ENCODE measurements at regions of chr3 and their contacts with region 1.

Region 1: DNA sequence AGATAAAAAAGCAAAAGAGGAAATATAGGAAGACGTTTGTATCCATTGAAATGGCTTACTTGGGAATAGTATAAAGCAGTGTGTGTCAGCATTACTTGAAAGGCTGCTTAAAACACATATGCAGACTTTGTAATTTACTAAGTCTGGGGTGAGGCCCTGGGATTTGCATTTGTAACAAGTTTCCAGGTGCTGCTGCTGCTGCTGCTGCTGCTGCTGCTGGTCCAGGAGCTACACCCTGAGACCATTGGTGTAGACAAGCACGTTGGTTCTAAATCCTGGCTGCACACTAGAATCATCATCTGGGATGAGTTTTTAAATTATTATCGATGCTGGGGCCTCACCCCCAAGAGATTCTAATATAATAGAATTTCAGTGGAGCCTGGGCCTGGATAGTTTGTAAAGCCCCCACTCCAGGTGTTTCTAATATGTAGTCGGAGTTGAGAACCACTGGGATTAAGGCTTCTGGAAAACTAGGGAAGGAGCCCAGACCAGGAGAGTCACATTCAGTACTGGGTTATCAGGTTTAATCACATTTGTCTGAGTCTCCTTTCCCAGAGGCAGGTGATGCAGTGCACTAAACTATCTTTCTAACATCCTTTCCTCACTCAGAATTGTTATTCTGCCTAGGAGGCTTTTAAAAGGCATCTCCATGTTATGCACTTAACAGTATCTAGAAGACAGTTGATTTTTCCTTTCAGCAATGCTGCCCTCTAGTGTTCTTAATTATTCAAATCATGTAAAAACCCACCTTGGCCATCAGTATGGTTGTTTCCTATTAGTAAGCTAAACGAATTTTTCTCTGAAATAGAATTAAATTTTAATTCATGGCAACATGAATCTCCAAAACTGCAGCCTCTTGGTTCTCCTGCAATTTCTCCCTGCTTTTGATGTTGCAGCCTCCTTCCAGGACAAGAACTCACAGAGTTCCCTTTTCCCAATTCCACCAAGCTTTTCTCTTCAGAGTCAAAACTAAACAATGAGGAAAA is 45.4 kb downstream of the SSR3 start:
- DNase-seq: peak; percentile 66
- ATAC-seq: peak; percentile 57
- H3K4me3 ChIP-seq: no peak overlapping the region
- H3K4me3 Mint-ChIP-seq: no peak overlapping the region
- H3K27ac ChIP-seq: no peak overlapping the region
- H3K27ac Mint-ChIP-seq: no peak overlapping the region
- H3K4me1 ChIP-seq: no peaks in the 10 kb centered on the region
- H3K4me1 Mint-ChIP-seq: no peaks in the 10 kb centered on the region
- H3K27me3 ChIP-seq: peaks cover 0 to 4% (median 2%) of the 10 kb centered on the region in 4 experiments
- H3K27me3 Mint-ChIP-seq: peaks cover 23% of the 10 kb centered on the region
- CTCF ChIP-seq: peak; percentile 81

Region 2: DNA sequence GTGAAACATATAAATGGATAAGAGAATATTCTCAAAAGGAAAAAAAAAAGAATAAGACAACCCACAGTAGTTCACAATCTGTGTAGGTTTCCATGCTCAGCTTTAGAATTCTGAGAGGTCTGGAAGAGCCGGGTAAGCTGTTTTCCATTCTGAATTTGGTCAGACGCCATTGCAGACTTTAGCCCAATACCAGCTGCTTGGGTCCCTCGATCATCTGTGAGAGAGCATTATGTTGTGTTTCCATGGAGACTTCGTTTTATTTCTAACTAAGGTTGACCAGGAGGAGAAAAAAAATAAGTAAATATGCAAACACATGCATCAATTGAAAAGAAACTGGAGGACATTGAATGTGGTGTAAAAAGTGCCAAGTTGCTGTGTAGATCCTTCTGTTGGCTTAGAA is 363.6 kb before region 1 on chr3:
- CTCF ChIA-PET with region 1: interaction called, 123 read pairs
- POLR2A ChIA-PET with region 1: no interaction called
- intact Hi-C with region 1: loop called (anchors 1 kb)
- DNase-seq: no peak
- ATAC-seq: no peak
- H3K4me3 ChIP-seq: no peak overlapping the region
- H3K4me3 Mint-ChIP-seq: no peak overlapping the region
- H3K27ac ChIP-seq: no peak overlapping the region
- H3K27ac Mint-ChIP-seq: no peak overlapping the region
- H3K4me1 ChIP-seq: no peaks in the 10 kb centered on the region
- H3K4me1 Mint-ChIP-seq: peaks cover 7% of the 10 kb centered on the region
- H3K27me3 ChIP-seq: peaks cover 0 to 3% (median 2%) of the 10 kb centered on the region in 4 experiments
- H3K27me3 Mint-ChIP-seq: peaks cover 26% of the 10 kb centered on the region
- CTCF ChIP-seq: no peak

Region 3: DNA sequence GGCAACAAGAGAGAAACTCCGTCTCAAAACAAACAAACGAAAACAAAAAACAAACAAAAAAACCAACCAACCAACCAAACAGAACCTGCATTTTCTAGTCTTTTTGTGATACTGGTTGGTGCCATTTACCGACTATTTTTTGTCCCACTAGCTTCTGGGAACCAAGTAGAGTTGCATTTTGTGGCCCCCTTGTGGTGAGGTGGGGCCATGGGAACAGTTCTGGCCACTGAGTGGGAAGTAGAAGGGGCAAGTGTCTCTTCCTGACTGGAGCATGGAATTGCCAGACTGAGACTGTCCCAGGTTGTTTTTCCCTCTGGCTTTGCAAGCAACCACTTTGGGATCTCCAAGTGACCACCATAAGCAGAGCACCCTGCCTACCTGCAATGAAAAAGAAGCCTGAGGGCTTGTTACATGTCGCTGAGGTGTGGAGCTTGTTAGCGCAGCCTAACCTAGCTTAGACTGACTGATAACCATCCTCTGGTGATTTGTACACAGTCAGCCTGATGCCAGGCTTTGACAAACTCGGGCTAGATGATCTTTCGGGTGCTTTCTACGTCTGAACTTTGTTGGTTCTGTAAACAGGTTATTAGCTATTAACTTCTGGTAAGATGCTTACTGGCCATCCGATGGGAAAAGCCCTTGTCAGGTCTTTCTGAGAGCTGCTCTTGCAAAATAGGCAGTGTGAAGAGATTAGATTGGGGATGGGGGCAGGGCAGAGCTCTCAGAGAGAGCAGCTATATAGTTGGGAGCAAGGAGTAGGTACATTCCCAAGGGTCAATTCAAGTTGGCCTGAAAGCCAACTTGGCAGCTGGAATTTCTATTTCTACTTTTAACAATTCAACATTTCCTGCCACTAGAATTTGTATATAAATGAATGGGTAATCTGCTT is 126.8 kb before region 1 on chr3:
- CTCF ChIA-PET with region 1: interaction called, 3 read pairs
- POLR2A ChIA-PET with region 1: no interaction called
- intact Hi-C with region 1: loop called (anchors 1 kb)
- DNase-seq: peak; percentile 14
- ATAC-seq: no peak
- H3K4me3 ChIP-seq: no peak overlapping the region
- H3K4me3 Mint-ChIP-seq: no peak overlapping the region
- H3K27ac ChIP-seq: no peak overlapping the region
- H3K27ac Mint-ChIP-seq: no peak overlapping the region
- H3K4me1 ChIP-seq: no peaks in the 10 kb centered on the region
- H3K4me1 Mint-ChIP-seq: no peaks in the 10 kb centered on the region
- H3K27me3 ChIP-seq: no peaks in the 10 kb centered on the region
- H3K27me3 Mint-ChIP-seq: peaks cover 17% of the 10 kb centered on the region
- CTCF ChIP-seq: peak; percentile 39

Region 4: DNA sequence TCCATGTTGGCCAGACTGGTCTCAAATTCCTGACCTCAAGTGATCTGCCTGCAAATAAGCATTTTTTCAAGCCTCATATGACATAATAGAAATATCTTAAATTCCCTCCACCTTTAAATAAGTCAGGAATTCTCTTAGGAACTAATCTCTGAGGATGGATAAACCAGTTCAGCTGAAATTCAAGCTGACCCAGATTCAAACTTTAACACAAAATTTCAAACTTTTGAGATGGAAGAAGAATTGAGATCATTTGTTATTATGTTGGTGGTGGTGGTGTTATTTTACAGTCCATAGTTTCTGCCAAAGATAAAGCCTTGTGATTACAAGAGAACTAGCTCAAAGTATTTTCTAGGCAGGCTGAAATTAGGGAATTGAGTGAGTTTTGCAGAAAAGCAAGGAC is 40.0 kb before region 1 on chr3:
- CTCF ChIA-PET with region 1: interaction called, 42 read pairs
- POLR2A ChIA-PET with region 1: no interaction called
- intact Hi-C with region 1: loop called (anchors 1 kb)
- DNase-seq: no peak
- ATAC-seq: no peak
- H3K4me3 ChIP-seq: no peak overlapping the region
- H3K4me3 Mint-ChIP-seq: no peak overlapping the region
- H3K27ac ChIP-seq: no peak overlapping the region
- H3K27ac Mint-ChIP-seq: no peak overlapping the region
- H3K4me1 ChIP-seq: no peaks in the 10 kb centered on the region
- H3K4me1 Mint-ChIP-seq: no peaks in the 10 kb centered on the region
- H3K27me3 ChIP-seq: no peaks in the 10 kb centered on the region
- H3K27me3 Mint-ChIP-seq: peaks cover 15% of the 10 kb centered on the region
- CTCF ChIP-seq: no peak

Region 5: DNA sequence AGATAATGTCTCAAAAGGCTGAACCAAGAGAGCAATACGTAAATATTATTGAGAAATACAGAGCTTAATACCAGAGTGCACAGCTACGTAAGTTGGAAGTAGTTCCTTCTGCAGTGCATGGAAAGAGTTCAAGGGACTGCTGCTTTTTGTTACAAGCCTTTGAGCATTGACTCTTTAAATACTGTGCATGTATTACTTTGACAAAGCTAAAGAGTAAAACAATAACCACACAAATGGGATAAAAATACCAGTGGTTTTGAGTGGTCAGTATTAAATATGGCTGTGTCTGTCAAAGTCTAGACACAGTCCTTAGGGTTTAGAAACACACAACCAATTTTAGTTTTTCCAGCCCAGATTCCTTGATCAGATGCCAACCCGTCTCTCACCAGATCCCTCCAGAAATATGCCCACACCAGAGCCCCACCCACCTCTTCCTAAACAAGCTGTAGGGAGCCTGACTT is 16.7 kb before region 1 on chr3:
- CTCF ChIA-PET with region 1: interaction called, 16 read pairs
- POLR2A ChIA-PET with region 1: no interaction called
- intact Hi-C with region 1: no loop called
- DNase-seq: no peak
- ATAC-seq: no peak
- H3K4me3 ChIP-seq: no peak overlapping the region
- H3K4me3 Mint-ChIP-seq: no peak overlapping the region
- H3K27ac ChIP-seq: no peak overlapping the region
- H3K27ac Mint-ChIP-seq: no peak overlapping the region
- H3K4me1 ChIP-seq: no peaks in the 10 kb centered on the region
- H3K4me1 Mint-ChIP-seq: no peaks in the 10 kb centered on the region
- H3K27me3 ChIP-seq: peaks cover 0 to 4% (median 0%) of the 10 kb centered on the region in 4 experiments
- H3K27me3 Mint-ChIP-seq: peaks cover 10% of the 10 kb centered on the region
- CTCF ChIP-seq: no peak

Measured in B cell (primary cell).